ENCODE measurements at regions of chr20 and their contacts with region 1.

Region 1: DNA sequence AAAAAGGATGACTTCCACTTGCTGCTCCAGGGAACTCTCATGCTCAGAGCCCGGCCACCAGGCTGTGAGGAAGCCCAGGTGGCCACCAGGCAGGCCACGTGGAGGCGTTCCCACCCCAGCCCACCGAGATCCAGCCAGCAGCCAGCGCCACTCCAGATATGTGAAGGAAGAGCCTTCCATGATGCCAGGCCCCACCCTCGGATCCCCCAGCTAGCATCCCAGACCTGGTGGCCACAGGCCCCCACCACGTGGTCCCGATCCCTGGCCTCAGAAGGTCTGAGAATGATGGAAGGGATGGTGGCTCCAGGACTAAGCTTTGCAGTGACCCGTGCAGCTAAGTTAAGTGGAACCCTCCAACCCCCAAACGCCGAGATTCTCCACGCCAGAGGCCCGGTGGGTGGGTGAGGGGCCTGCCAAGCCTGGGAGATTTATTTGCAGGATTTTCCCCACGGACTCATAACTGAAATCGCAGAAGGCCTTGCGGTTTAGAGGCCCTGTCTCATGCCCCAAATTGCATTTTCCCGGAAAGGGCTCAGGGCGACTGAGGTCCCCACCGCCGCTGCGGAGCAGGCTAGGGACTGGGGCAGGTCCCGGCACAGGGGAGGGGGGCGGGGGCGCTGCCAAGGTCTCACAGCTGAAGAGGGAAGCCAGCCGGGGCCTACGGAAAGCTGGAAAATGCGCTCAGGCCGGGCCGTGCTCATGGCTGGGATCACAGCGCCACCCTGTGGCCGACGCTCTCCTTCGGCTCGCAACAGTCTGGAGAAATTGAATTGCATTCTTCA is 31.1 kb upstream of the CST7 start:
- DNase-seq: peak; percentile 70
- H3K27ac ChIP-seq: no peak overlapping the region
- CTCF ChIP-seq: peak; percentile 91

Region 2: DNA sequence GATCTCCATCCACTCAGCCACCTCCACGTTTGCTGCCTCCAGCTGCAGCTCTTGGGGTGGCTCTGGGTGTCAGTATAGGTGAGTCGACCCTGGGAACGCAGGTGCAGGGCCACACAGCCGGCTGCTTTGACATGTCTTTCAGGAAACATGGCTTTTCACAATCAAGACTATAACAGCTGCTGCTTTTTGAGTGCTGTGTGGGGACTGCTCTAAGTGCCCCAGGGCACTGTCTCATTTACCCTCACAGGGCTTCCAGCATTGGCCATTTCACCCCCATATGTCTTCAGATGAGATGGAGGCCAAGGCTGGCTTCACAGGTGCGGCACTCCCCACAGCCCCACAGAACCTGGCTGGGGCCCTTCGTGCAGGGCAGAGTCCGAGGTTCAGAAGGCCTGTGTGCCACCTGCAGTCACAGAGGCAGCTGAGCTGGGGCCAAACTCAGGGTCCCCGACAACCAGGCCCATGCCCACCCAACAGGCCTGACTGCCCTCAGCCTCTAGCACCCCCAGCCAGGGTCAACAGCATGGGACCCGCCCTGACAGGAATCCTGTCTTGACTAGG is 16.2 kb after region 1 on chr20:
- CTCF ChIA-PET with region 1: interaction called, 11 read pairs
- POLR2A ChIA-PET with region 1: no interaction called
- DNase-seq: no peak
- H3K27ac ChIP-seq: no peak overlapping the region
- CTCF ChIP-seq: no peak